PC-9 (cell line): ENCODE measurements at regions of chr7 and their contacts with region 1.

Region 1: DNA sequence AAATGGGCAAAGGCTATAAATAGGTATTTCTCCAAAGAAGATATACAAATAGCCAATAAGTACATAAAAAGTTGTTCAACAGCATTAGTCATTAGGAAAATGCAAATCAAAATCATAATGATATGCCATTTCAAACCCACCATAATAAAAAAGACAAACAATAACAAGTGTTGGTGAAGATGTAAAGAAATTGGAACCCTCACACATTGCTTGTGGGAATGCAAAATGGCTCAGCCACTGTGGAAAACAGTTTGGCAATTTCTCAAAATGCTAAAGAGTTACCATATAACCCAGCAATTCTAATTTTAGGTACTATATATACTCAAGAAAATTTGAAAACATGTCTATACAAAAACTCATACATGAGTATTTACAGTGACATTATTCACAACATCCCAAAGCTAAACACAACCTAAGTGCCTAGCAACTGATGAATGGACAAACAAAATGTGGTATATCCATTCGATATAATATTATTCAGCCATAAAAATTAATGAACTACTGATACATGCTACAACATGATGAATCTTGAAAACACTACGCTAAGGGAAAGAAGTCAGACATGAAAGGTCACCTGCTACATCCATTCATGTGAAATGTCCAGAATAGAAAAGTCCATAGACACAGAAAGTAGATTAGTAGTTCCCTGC is 55.6 kb downstream of the CHCHD3 start:
- DNase-seq: no peak
- H3K4me3 ChIP-seq: no peak overlapping the region
- H3K27ac ChIP-seq: no peak overlapping the region
- H3K4me1 ChIP-seq: no peaks in the 10 kb centered on the region
- H3K27me3 ChIP-seq: no peaks in the 10 kb centered on the region
- CTCF ChIP-seq: no peak

Region 2: GRCh38 chr7:133048589-133048988 is 22.3 kb after region 1 on chr7:
- CTCF ChIA-PET with region 1: no interaction called
- POLR2A ChIA-PET with region 1: interaction called, 16 read pairs
- intact Hi-C with region 1: no loop called
- DNase-seq: no peak
- H3K4me3 ChIP-seq: no peak overlapping the region
- H3K27ac ChIP-seq: no peak overlapping the region
- H3K4me1 ChIP-seq: no peaks in the 10 kb centered on the region
- H3K27me3 ChIP-seq: no peaks in the 10 kb centered on the region
- CTCF ChIP-seq: no peak